ENCODE measurements at regions of chr3 and their contacts with region 1.

Region 1: GRCh38 chr3:72722930-72723726 is 125.1 kb downstream of the SHQ1 start:
- DNase-seq: peak; percentile 27
- H3K4me3 Mint-ChIP-seq: no peak overlapping the region
- H3K27ac Mint-ChIP-seq: no peak overlapping the region
- H3K4me1 Mint-ChIP-seq: peaks cover 17% of the 10 kb centered on the region
- H3K27me3 Mint-ChIP-seq: no peaks in the 10 kb centered on the region

Region 2: DNA sequence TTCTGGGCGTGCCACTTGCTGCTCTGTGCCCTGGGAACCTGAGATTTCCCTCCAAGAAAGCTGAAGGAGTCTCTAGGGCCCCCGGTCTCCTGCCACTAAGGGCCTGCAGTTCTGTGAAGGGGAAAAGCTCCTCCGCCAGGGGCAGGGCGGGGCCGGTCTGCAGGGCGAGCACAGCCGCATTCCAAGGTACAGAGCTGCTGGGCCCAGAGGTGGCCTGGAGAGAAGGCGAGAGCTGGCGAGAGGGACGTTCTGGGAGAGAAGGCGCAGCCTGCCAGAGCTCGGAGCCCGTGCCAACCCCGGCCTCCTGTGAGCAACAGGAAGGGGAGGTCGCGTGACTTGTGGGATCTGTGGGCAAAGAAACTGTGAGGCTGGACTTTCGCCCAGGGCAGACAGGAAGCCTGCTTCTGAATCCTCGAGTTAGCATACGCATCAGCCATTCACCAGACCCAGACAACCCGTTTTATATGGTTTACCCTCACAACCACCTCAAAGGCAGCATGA is 375.3 kb before region 1 on chr3:
- CTCF ChIA-PET with region 1: no interaction called
- intact Hi-C with region 1: loop called (anchors 10 kb)
- DNase-seq: peak; percentile 72
- H3K4me3 Mint-ChIP-seq: no peak overlapping the region
- H3K27ac Mint-ChIP-seq: no peak overlapping the region
- H3K4me1 Mint-ChIP-seq: peaks cover 55% of the 10 kb centered on the region
- H3K27me3 Mint-ChIP-seq: no peaks in the 10 kb centered on the region